ENCODE measurements at regions of chr17 and their contacts with region 1.

Region 1: DNA sequence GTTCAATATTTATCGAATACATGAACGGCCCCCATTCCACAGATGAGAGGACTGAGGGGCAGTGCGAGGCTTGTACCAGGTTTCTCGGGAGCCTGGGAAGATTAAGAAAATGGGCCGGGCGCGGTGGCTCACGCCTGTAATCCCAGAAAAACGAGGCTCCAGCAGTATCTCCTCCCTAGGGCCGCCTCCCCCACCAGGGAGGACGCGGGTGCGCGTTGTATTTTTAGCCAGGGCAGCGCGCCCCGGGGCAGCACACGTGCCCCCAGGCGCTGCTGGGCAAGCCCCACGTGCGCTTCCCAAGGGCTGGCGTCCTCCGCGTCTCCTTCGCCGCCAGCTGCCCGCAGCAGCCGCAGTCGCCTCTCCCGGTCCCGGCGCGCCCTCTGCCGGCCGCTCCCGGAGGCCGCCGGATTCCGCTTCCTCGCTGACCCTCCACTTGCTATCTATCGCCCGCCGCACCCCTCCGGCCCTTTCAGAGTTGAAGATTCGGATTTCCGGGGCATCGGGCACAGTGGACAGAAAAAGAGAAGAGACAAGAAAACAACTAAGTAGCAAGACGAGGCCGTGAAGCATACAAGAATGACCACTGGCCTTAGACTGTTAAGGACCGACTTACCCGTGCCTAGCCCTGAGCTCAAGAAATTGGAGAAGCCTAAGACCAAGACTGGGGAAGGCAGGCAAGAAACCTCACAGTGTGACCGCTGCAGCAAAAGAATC is 1.9 kb upstream of the YBX2 start:
- DNase-seq: peak; percentile 76
- H3K4me3 ChIP-seq: peak overlapping the region; percentile 70
- H3K27ac ChIP-seq: no peak overlapping the region
- H3K4me1 ChIP-seq: peaks cover 35% of the 10 kb centered on the region
- CTCF ChIP-seq: peak; percentile 96

Region 2: DNA sequence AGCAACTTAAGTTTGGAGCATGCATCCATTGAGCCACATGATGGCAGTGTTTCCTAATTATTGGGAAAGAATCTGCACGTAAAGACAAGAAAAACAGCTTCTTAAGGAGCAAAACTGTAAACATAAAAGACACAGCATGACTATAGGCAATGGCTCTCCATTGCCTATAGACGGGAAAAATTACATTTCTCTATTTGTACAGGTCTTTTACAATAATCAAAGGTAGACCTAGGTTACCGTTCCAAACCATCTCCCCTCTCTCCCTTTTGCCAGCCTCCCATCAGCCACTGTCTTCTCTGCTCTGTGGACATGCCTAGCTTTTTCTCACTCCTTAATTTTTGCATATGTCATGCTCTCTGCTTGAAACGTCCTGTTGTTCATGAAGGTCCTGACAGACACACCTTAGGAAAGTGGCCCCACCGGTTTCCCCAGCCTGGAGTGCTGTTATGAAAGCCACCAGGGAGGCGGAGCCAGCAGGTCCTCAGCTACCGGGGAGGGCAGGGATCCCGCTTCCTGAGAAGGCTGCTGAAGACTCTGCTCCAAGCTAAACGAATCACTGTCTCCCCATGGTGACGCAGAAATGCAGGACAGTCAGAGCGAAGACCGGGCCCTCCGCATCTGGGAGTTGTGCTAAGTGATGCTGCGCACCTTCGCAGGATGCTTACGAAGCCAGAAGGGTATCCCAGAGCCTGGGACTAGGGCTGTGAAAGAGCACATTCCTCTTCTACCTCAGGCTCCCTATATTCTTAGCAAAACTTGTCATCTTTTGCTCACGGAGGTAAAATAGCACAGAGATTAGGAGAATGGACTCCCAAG is 250.2 kb before region 1 on chr17:
- CTCF ChIA-PET with region 1: no interaction called
- POLR2A ChIA-PET with region 1: no interaction called
- intact Hi-C with region 1: loop called (anchors 5 kb)
- DNase-seq: peak; percentile 74
- H3K4me3 ChIP-seq: peak overlapping the region; percentile 20
- H3K27ac ChIP-seq: no peak overlapping the region
- H3K4me1 ChIP-seq: peaks cover 19% of the 10 kb centered on the region
- CTCF ChIP-seq: peak; percentile 98

Region 3: GRCh38 chr17:7219812-7220581 is 76.3 kb before region 1 on chr17 and contains the starts of genes ACADVL and DLG4:
- CTCF ChIA-PET with region 1: no interaction called
- POLR2A ChIA-PET with region 1: no interaction called
- intact Hi-C with region 1: loop called (anchors 2 kb)
- DNase-seq: peak; percentile 81
- H3K4me3 ChIP-seq: peak within 1 kb of the TSS; percentile 78
- H3K27ac ChIP-seq: peak within 1 kb of the TSS; percentile 71
- H3K4me1 ChIP-seq: peaks cover 51% of the 10 kb centered on the region
- CTCF ChIP-seq: no peak
- total RNA-seq, gene ACADVL: 226 and 297 TPM in 2 replicates
- total RNA-seq, gene DLG4: 9.0 and 15.4 TPM in 2 replicates

Region 4: DNA sequence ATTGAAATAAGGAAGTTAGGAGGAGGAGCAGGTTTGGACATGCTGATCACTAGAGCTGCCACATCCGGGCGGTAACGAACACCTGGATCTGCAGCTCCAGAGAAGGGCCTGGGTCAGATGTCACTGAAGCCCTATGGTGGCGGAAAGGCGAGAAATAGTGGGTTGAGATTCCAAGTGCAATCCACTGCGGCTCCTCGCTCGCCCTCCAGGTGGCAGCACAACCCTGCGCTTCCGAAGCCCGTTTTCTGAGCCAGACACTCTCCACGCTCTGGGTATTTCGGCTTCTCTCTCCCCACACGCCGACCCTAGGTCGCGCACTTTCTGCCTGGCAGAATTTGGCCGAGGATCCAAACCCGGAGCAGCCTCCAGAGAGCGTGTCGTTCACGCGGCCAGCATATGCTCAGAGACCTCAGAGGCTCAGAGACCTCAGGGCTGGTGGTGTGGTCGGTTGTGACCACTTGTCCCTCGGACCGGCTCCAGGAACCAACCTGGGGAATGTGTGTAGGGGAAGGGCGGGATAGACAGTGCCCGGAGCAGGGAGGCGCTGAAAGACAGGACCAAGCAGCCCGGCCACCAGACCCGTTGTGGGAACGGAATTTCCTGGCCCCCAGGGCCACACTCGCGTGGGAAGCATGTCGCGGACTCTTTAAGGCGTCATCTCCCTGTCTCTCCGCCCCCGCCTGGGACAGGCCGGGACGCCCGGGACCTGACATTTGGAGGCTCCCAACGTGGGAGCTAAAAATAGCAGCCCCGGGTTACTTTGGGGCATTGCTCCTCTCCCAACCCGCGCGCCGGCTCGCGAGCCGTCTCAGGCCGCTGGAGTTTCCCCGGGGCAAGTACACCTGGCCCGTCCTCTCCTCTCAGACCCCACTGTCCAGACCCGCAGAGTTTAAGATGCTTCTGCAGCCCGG is 15.6 kb before region 1 on chr17:
- CTCF ChIA-PET with region 1: interaction called, 4 read pairs
- POLR2A ChIA-PET with region 1: interaction called, 5 read pairs
- intact Hi-C with region 1: loop called (anchors 1 kb)
- DNase-seq: peak; percentile 92
- H3K4me3 ChIP-seq: peak overlapping the region; percentile 59
- H3K27ac ChIP-seq: peak overlapping the region; percentile 57
- H3K4me1 ChIP-seq: peaks cover 32% of the 10 kb centered on the region
- CTCF ChIP-seq: peak; percentile 96